SK-N-SH (cell line): ENCODE measurements at regions of chr11 and their contacts with region 1.

Region 1: DNA sequence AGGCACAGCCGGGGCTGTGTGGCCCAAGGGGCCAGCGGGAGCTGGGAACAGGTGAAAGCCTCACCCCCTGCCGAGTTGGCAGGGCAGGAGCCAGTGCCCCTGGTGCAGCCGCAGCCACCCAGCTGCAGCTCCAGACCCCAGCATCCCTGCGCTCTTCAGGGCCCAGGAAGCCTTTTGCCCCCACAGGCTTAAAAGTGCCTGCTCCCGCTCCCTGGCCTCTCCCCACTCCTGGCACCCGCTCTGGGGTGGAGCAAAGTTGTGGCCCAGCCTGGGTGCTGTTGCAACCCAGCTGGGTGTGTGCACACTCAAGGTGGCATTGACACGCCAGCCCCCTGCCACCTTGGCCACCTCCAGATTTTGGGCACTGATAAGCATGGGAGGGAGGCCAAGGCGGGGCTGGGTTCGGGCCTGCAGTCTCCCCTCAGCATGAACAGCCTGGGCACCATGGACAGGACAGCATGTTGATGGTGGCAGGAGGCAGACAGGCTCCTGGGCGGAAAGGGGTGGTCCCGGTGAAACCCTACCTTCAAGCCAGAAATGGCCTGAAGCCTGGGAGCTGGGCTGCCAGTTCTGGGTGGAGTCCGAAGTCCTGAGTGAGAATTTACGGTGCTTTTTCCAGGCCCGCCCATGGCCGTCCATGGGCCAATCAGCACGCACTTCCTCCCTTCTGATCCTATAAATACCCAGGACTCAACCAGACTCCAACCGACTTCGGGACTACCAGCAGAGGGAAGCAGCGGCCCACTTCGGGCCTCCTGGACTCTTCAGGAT is 23.5 kb upstream of the RNASEH2C start:
- DNase-seq: peak; percentile 73
- H3K4me3 ChIP-seq: no peak overlapping the region
- H3K27ac ChIP-seq: no peak overlapping the region
- H3K4me1 ChIP-seq: peaks cover 0 to 10% of the 10 kb centered on the region in 2 experiments; a peak in 1 of 4 replicates
- H3K27me3 ChIP-seq: peaks cover 10% of the 10 kb centered on the region; the same call in 1 of the 2 replicates
- CTCF ChIP-seq: peak; percentile 49
- EP300 ChIP-seq: no peak
- RAD21 ChIP-seq: peak; percentile 69

Region 2: DNA sequence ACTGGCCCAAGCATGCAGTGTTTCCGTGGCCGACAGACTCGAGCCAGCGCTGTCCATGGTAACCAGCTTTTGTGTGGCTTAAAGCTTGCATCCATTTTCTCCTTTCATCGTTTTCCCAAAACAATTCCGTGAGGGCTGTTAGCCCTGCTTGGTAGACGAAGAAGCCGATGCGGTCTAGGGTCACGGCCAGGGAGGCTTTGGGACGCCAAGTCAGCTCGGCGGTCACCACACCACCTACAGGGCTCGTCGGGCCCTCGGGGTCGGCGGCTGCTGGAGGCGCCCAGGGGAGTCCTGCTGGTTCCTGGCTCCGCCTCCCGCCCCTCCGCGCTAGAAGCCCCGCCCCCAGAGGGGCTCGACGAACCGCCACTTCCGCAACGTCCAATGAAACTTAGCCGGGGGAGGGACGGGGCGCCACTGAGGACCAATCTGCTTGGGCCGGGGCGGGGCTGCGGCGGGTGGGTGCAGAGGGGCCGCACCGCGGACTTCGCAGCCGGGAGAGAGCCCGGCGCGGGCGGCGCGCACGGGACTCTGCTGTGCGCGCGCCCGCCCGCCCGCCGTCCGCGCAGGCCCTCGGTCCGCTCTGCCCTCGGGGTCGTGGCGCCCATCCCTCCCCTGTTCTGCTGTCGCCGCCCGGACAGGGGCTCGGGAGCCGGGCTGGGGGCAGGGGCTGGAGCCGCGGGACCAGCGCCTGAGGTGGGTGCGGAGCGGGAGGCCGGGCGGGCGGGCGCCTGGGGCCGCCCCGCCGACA is 389.7 kb before region 1 on chr11 and contains the start of gene TIGD3:
- CTCF ChIA-PET with region 1: no interaction called
- POLR2A ChIA-PET with region 1: no interaction called
- DNase-seq: peak; percentile 99
- H3K4me3 ChIP-seq: peak within 1 kb of the TSS; percentile 71 to 74
- H3K27ac ChIP-seq: peak within 1 kb of the TSS; percentile 34 to 83
- H3K4me1 ChIP-seq: peaks cover 0 to 20% of the 10 kb centered on the region in 2 experiments; a peak in 1 of 4 replicates
- H3K27me3 ChIP-seq: no peaks in the 10 kb centered on the region
- CTCF ChIP-seq: 0 out of 2 replicates have a peak, but pooled peaks have one; percentile 13
- EP300 ChIP-seq: no peak
- RAD21 ChIP-seq: no peak
- polyA plus RNA-seq, gene TIGD3: 0.34 and 0.41 TPM in 2 replicates

Region 3: DNA sequence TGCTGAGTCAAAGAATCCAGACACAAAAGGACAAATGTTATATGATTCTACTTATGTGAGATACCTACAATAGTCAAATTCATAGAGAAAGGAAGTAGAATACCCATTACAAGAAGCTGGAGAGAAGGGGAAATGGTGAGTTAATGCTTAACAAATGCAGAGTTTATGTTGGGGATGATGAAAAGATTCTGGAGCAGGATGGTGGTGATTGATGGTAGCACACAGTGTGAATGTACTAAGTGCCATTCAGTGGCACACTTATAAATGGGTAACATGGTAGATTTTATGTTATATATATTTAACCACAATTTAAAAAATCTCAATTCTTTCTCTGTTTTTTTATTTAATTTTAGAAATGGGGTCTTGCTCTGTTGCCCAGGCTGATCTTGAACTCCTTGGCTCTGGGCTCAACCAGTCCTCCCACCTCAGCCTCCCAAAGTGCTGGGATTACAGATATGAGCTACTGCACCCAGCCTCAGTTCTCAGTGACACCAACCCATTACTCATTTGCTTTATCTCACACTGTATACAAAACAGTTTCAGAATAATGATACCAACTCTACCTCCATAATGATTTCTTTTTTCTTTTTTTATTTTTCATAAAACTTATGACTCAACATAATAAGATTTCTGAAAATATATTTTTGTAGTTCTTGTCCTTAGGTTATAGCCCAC is 71.8 kb before region 1 on chr11:
- CTCF ChIA-PET with region 1: no interaction called
- POLR2A ChIA-PET with region 1: no interaction called
- DNase-seq: no peak
- H3K4me3 ChIP-seq: no peak overlapping the region
- H3K27ac ChIP-seq: no peak overlapping the region
- H3K4me1 ChIP-seq: no peaks in the 10 kb centered on the region
- H3K27me3 ChIP-seq: no peaks in the 10 kb centered on the region
- CTCF ChIP-seq: no peak
- EP300 ChIP-seq: no peak
- RAD21 ChIP-seq: no peak

Region 4: GRCh38 chr11:65720237-65720934 is 23.7 kb before region 1 on chr11 and contains the start of gene RNASEH2C:
- CTCF ChIA-PET with region 1: interaction called, 15 read pairs
- POLR2A ChIA-PET with region 1: interaction called, 5 read pairs
- DNase-seq: peak; percentile 93
- H3K4me3 ChIP-seq: peak within 1 kb of the TSS; percentile 76 to 85
- H3K27ac ChIP-seq: peak within 1 kb of the TSS; percentile 48 to 94; a peak in 3 of 4 replicates
- H3K4me1 ChIP-seq: peaks cover 7 to 19% of the 10 kb centered on the region in 2 experiments; a peak in 1 of 4 replicates
- H3K27me3 ChIP-seq: no peaks in the 10 kb centered on the region
- CTCF ChIP-seq: no peak
- EP300 ChIP-seq: no peak
- RAD21 ChIP-seq: no peak
- polyA plus RNA-seq, gene RNASEH2C: 43.9 and 50.9 TPM in 2 replicates

Region 5: GRCh38 chr11:65726660-65727059 is 17.5 kb before region 1 on chr11:
- CTCF ChIA-PET with region 1: interaction called, 19 read pairs
- POLR2A ChIA-PET with region 1: no interaction called
- DNase-seq: no peak
- H3K4me3 ChIP-seq: no peak overlapping the region
- H3K27ac ChIP-seq: no peak overlapping the region
- H3K4me1 ChIP-seq: no peaks in the 10 kb centered on the region
- H3K27me3 ChIP-seq: no peaks in the 10 kb centered on the region
- CTCF ChIP-seq: peak; percentile 15; the same call in 1 of the 2 replicates
- EP300 ChIP-seq: no peak
- RAD21 ChIP-seq: no peak

Region 6: GRCh38 chr11:65766535-65766934 is 22.4 kb after region 1 on chr11:
- CTCF ChIA-PET with region 1: interaction called, 25 read pairs
- POLR2A ChIA-PET with region 1: no interaction called
- DNase-seq: no peak
- H3K4me3 ChIP-seq: no peak overlapping the region
- H3K27ac ChIP-seq: no peak overlapping the region
- H3K4me1 ChIP-seq: no peaks in the 10 kb centered on the region
- H3K27me3 ChIP-seq: no peaks in the 10 kb centered on the region
- CTCF ChIP-seq: no peak
- EP300 ChIP-seq: no peak
- RAD21 ChIP-seq: no peak

Region 7: DNA sequence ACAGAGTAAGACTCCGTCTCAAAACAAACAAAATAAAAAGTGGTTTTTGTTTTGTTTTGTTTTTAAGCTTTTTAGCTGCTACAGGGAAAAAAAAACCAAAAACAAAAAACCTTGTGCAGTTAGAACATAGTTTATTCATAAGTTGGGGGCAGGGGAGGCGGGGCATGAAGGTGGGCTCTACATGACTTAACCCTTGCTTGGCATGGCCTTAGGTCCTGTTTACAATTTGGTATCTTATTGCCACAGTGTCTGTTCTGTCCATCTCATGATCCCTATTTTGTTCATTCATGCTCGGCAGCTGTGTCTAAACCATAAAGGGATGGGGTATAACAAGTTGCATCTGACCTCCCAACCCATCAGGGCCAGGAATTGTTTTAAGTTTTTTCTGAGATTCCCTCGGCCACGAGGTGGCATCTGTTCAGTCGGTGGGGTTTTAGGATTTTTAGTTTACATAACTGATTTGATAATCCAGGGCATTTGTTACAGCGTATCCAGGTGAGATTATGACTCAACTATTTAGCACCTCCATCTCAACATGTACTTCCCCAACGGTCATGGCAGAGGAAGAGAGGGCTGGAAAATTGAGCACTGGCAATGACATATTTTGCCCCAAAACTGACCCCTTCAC is 29.8 kb after region 1 on chr11:
- CTCF ChIA-PET with region 1: interaction called, 59 read pairs
- POLR2A ChIA-PET with region 1: no interaction called
- DNase-seq: no peak
- H3K4me3 ChIP-seq: no peak overlapping the region
- H3K27ac ChIP-seq: no peak overlapping the region
- H3K4me1 ChIP-seq: no peaks in the 10 kb centered on the region
- H3K27me3 ChIP-seq: no peaks in the 10 kb centered on the region
- CTCF ChIP-seq: no peak
- EP300 ChIP-seq: no peak
- RAD21 ChIP-seq: no peak